Panc1 (cell line): ENCODE measurements at regions of chr2 and their contacts with region 1.

Region 1: DNA sequence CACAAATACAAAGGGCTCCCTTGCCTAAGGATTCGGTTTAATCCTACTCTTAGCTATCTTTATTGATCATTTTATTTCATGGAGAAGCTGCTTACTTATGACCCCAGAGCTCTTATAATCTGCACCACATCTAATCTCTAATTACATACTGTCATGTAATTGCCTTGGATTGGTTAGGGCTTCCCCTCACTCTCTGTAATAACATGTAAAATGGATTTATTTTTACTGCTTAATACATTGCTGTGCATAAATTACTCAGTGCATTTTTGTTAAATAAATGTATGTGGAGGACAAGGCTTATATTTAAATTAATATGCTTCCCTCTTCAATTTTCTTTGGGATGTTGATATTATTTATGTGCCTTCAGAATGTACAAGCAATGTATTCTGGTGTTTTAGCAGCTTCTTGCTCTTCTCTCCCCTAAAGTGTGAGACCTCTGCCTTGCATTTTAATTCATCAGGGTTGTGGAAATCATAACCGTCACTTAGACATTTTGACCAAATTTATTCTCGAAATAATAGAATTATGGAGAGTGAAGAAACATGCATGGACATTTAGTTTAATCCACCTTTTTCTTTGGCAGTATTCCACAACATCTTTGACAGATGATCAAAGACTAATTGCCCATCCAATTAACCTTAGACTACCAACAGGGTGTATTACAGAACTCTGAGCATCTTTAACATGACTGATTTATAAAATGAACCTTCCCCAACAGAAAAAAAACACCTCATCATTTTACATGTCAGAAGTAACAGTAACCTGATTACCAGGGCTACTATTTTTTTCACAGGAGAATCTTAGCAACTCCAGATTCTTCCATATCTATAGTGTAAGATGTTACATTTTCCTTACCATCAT is 692.6 kb downstream of the LRRTM4 start:
- DNase-seq: no peak
- ATAC-seq: no peak
- H3K4me3 ChIP-seq: no peak overlapping the region
- H3K27ac ChIP-seq: no peak overlapping the region
- H3K4me1 ChIP-seq: no peaks in the 10 kb centered on the region
- H3K27me3 ChIP-seq: no peaks in the 10 kb centered on the region
- CTCF ChIP-seq: no peak

Region 2: DNA sequence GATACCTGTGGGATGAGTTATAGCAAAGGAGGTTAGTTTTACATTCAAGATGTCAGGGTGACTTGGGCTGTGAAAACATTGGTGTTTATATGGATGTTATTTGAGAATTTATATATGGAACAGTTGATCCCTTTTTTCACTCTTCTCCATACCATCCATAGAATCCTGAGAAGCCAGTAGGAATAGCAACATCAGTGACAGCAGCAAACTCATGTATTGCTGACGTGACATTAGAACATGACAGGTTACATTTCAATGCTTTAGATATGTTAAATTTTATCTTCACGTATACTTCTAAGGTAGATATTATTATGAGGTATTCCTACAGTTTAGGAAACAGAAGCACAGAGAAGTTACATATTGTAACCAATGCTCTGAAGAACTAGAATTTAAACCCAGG is 373.7 kb before region 1 on chr2:
- CTCF ChIA-PET with region 1: interaction called, 12 read pairs
- POLR2A ChIA-PET with region 1: no interaction called
- in situ Hi-C with region 1: no loop called
- intact Hi-C with region 1: no loop called
- DNase-seq: no peak
- ATAC-seq: no peak
- H3K4me3 ChIP-seq: no peak overlapping the region
- H3K27ac ChIP-seq: no peak overlapping the region
- H3K4me1 ChIP-seq: no peaks in the 10 kb centered on the region
- H3K27me3 ChIP-seq: no peaks in the 10 kb centered on the region
- CTCF ChIP-seq: no peak

Region 3: GRCh38 chr2:76599732-76600368 is 229.8 kb before region 1 on chr2:
- CTCF ChIA-PET with region 1: no interaction called
- POLR2A ChIA-PET with region 1: no interaction called
- in situ Hi-C with region 1: no loop called
- intact Hi-C with region 1: no loop called
- DNase-seq: peak; percentile 54
- ATAC-seq: peak; percentile 90
- H3K4me3 ChIP-seq: no peak overlapping the region
- H3K27ac ChIP-seq: no peak overlapping the region
- H3K4me1 ChIP-seq: no peaks in the 10 kb centered on the region
- H3K27me3 ChIP-seq: no peaks in the 10 kb centered on the region
- CTCF ChIP-seq: peak; percentile 82

Region 4: DNA sequence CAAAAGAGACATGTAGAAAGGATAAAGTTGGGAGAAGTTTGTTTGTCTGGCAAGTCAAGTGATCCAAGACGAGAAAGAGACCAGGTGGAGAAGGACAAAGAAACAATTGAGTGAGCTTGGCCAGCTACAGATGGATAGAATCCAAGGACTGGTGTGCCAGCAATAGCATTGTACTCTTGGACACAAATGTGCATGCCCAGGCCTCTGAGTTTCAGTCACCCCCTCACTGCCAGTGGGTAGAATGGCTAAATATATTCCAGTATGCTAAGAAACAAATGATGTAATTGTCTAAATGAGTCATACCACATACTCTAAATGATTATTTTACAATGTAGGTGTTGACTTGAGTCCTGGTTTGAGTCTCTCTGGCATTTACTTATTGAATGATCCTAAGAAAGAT is 188.7 kb before region 1 on chr2:
- CTCF ChIA-PET with region 1: no interaction called
- POLR2A ChIA-PET with region 1: no interaction called
- in situ Hi-C with region 1: no loop called
- intact Hi-C with region 1: no loop called
- DNase-seq: no peak
- ATAC-seq: no peak
- H3K4me3 ChIP-seq: no peak overlapping the region
- H3K27ac ChIP-seq: no peak overlapping the region
- H3K4me1 ChIP-seq: no peaks in the 10 kb centered on the region
- H3K27me3 ChIP-seq: no peaks in the 10 kb centered on the region
- CTCF ChIP-seq: no peak

Region 5: GRCh38 chr2:76851000-76851399 is 21.4 kb after region 1 on chr2:
- CTCF ChIA-PET with region 1: no interaction called
- POLR2A ChIA-PET with region 1: no interaction called
- in situ Hi-C with region 1: no loop called
- intact Hi-C with region 1: no loop called
- DNase-seq: no peak
- ATAC-seq: no peak
- H3K4me3 ChIP-seq: no peak overlapping the region
- H3K27ac ChIP-seq: no peak overlapping the region
- H3K4me1 ChIP-seq: no peaks in the 10 kb centered on the region
- H3K27me3 ChIP-seq: no peaks in the 10 kb centered on the region
- CTCF ChIP-seq: no peak